ENCODE measurements at regions of chr2 and their contacts with region 1.

Region 1: GRCh38 chr2:11784747-11785610 is 38.5 kb downstream of the LPIN1 start:
- DNase-seq: no peak
- ATAC-seq: peak; percentile 71
- H3K4me3 ChIP-seq: peak overlapping the region; percentile 31
- H3K27ac ChIP-seq: no peak overlapping the region
- H3K4me1 ChIP-seq: no peaks in the 10 kb centered on the region
- H3K27me3 ChIP-seq: no peaks in the 10 kb centered on the region
- CTCF ChIP-seq: peak; percentile 96

Region 2: GRCh38 chr2:11697103-11697871 is 87.7 kb before region 1 on chr2:
- intact Hi-C with region 1: loop called (anchors 5 kb)
- DNase-seq: peak; percentile 75
- ATAC-seq: peak; percentile 36
- H3K4me3 ChIP-seq: no peak overlapping the region
- H3K27ac ChIP-seq: peak overlapping the region; percentile 73
- H3K4me1 ChIP-seq: peaks cover 21% of the 10 kb centered on the region
- H3K27me3 ChIP-seq: no peaks in the 10 kb centered on the region
- CTCF ChIP-seq: no peak